Cardiac septum (tissue), 1 donor: ENCODE measurements at regions of chr10 and their contacts with region 1.

Region 1: GRCh38 chr10:115710172-115710571 is 562.8 kb downstream of the GFRA1 start:
- DNase-seq: no peak

Region 2: DNA sequence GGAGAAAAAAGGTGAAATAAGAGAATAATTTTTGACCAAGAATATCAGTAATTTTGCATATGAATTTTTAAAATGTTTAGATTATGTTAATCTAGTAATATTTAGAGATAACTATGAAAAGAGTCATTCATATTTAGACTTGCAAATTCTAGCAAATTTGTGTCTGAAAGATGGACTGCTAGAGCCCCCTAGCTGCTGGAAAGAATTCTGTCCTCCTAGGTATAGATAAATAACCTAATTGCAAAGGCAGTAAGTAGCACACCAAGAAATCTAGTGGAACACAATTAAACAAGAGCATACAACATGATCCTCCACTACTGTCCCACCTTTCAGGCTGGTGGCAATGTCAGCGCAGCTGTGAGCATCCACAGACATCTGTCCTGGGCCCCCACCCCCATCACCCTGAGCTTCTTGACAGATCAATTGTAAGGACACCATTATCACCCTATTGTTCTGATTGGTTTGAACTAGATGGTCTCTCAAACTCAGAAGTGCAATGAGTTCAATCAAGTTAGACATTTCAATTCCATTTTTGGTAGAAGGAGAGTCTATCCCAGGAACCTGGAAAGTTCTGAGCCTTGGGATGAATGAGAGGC is 577.8 kb after region 1 on chr10:
- intact Hi-C with region 1: loop called (anchors 10 kb)
- DNase-seq: no peak